ENCODE measurements at regions of chr7 and their contacts with region 1.

Region 1: DNA sequence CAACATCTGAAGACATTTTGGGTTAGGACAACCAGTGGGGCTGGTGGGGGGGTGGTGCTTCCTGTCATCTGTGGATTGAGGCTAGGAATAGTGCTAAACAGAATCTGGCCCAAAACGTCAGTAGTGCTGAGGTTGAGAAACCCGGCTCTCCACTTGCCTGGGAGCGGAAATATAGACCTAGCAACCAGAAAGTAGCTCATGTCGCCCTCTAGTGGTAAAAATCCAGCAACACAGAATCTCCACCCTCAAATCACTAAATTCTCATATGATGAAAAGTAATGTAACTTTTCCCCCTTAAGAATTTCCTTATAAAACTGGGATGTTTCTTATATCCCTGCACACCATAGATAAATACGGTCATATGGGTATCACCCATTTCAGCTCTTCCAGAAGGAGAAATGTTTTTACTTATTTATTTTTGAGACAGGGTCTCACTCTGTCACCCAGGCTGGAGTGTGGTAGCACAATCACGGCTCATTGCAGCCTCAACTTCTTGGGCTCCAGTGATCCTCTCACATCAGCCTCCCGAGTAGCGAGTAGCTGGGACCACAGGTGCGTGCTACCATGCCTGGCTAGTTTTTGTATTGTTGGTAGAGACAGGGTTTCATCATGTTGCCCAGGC is 34.4 kb downstream of the ZC3HAV1 start:
- DNase-seq: peak; percentile 28 to 92 (median 73)
- ATAC-seq: peak; percentile 77
- H3K4me3 ChIP-seq: no peak overlapping the region
- H3K4me3 Mint-ChIP-seq: peak overlapping the region; percentile 60
- H3K27ac ChIP-seq: peak overlapping the region in 1 of 2 experiments; percentile 74
- H3K27ac Mint-ChIP-seq: peak overlapping the region; percentile 86
- H3K4me1 ChIP-seq: peaks cover 73% of the 10 kb centered on the region
- H3K4me1 Mint-ChIP-seq: peaks cover 66% of the 10 kb centered on the region
- H3K27me3 ChIP-seq: no peaks in the 10 kb centered on the region
- H3K27me3 Mint-ChIP-seq: no peaks in the 10 kb centered on the region
- CTCF ChIP-seq: peak; percentile 70

Region 2: DNA sequence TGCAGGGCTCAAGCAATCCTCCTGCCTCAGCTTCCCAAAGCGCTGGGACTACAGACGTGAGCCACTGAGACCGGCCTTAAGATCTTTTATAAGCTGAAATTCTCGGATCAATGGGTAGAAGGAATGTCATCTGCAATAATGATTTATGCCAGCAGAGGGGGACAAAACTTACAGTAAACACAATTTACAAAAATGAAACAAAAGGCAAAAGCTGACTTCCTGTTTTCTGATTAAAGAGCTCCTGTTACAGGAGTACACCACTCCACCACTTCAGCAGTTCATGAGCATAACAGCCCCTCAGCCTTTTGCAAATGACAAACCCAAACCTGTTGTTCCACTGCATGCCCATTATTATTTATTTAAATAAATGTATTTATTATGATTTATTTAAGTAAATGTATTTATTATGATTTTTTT is 188.6 kb before region 1 on chr7:
- CTCF ChIA-PET with region 1: interaction called, 14 read pairs
- POLR2A ChIA-PET with region 1: interaction called, 6 read pairs
- intact Hi-C with region 1: loop called (anchors 1 kb)
- DNase-seq: peak in 6 of 9 experiments; percentile 15 to 84 (median 50)
- ATAC-seq: peak; percentile 93
- H3K4me3 ChIP-seq: no peak overlapping the region
- H3K4me3 Mint-ChIP-seq: peak overlapping the region; percentile 20
- H3K27ac ChIP-seq: peak overlapping the region in 1 of 2 experiments; percentile 5
- H3K27ac Mint-ChIP-seq: peak overlapping the region; percentile 78
- H3K4me1 ChIP-seq: peaks cover 3% of the 10 kb centered on the region
- H3K4me1 Mint-ChIP-seq: peaks cover 12% of the 10 kb centered on the region
- H3K27me3 ChIP-seq: no peaks in the 10 kb centered on the region
- H3K27me3 Mint-ChIP-seq: no peaks in the 10 kb centered on the region
- CTCF ChIP-seq: peak; percentile 72

Region 3: GRCh38 chr7:139023076-139023475 is 52.1 kb before region 1 on chr7:
- CTCF ChIA-PET with region 1: interaction called, 72 read pairs
- POLR2A ChIA-PET with region 1: interaction called, 4 read pairs
- intact Hi-C with region 1: no loop called
- DNase-seq: no peak
- ATAC-seq: no peak
- H3K4me3 ChIP-seq: no peak overlapping the region
- H3K4me3 Mint-ChIP-seq: no peak overlapping the region
- H3K27ac ChIP-seq: no peak overlapping the region
- H3K27ac Mint-ChIP-seq: no peak overlapping the region
- H3K4me1 ChIP-seq: no peaks in the 10 kb centered on the region
- H3K4me1 Mint-ChIP-seq: peaks cover 2% of the 10 kb centered on the region
- H3K27me3 ChIP-seq: no peaks in the 10 kb centered on the region
- H3K27me3 Mint-ChIP-seq: no peaks in the 10 kb centered on the region
- CTCF ChIP-seq: no peak

Region 4: DNA sequence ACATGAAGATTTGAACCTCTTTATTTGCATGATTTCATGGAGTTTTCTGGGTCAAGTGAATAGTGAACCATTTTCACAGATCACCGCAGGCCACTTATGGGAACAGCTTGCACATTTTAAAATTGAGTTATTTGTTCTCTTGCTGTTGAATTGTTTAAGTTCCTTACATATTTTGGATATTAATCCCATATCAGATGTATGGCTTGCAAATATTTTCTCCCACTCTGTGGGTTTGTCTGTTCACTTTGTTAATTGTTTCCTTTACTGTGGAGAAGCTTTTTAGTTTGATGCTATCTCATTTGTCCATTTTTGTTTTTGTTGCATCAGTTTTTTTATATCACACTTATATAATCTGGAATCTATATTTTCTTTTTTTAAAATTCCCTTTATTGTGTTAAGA is 25.2 kb before region 1 on chr7:
- CTCF ChIA-PET with region 1: interaction called, 19 read pairs
- POLR2A ChIA-PET with region 1: no interaction called
- intact Hi-C with region 1: loop called (anchors 2 kb)
- DNase-seq: no peak
- ATAC-seq: no peak
- H3K4me3 ChIP-seq: no peak overlapping the region
- H3K4me3 Mint-ChIP-seq: no peak overlapping the region
- H3K27ac ChIP-seq: no peak overlapping the region
- H3K27ac Mint-ChIP-seq: peak overlapping the region; percentile 73
- H3K4me1 ChIP-seq: peaks cover 7% of the 10 kb centered on the region
- H3K4me1 Mint-ChIP-seq: peaks cover 40% of the 10 kb centered on the region
- H3K27me3 ChIP-seq: no peaks in the 10 kb centered on the region
- H3K27me3 Mint-ChIP-seq: no peaks in the 10 kb centered on the region
- CTCF ChIP-seq: no peak

Region 5: DNA sequence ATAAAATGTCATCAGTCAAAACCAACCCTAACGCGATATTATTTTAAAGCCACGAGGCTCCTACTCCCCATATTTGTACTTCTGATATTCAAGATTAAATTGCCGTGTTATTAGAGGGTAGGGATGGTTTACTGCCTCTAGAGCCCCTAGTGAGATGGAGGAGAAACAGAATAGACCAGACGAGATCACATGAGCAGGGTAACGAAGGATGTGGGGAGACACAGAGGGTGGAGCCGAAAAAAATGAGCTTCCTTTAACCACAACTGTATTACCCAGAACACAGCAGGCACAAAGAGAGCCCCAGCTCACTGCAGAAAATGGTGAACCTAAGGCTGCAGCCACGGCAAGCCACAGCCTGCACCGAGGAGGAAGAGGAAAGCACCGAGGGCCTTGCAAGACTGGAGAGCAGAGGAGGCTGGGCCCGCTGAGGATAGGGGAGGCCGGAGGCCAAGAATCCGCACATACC is 20.1 kb after region 1 on chr7:
- CTCF ChIA-PET with region 1: interaction called, 24 read pairs
- POLR2A ChIA-PET with region 1: interaction called, 37 read pairs
- intact Hi-C with region 1: loop called in 1 of 2 experiments (anchors 1 kb)
- DNase-seq: peak; percentile 57 to 96 (median 82)
- ATAC-seq: peak; percentile 84
- H3K4me3 ChIP-seq: peak overlapping the region; percentile 34 to 53
- H3K4me3 Mint-ChIP-seq: peak overlapping the region; percentile 84
- H3K27ac ChIP-seq: peak overlapping the region; percentile 61 to 76
- H3K27ac Mint-ChIP-seq: peak overlapping the region; percentile 95
- H3K4me1 ChIP-seq: peaks cover 82% of the 10 kb centered on the region
- H3K4me1 Mint-ChIP-seq: peaks cover 86% of the 10 kb centered on the region
- H3K27me3 ChIP-seq: no peaks in the 10 kb centered on the region
- H3K27me3 Mint-ChIP-seq: no peaks in the 10 kb centered on the region
- CTCF ChIP-seq: no peak

Region 6: GRCh38 chr7:139109188-139109982 is 34.2 kb after region 1 on chr7 and contains the start of gene ZC3HAV1:
- CTCF ChIA-PET with region 1: interaction called, 10 read pairs
- POLR2A ChIA-PET with region 1: interaction called, 10 read pairs
- intact Hi-C with region 1: loop called in 1 of 2 experiments (anchors 1 kb)
- DNase-seq: peak; percentile 78 to 97 (median 89)
- ATAC-seq: peak; percentile 87
- H3K4me3 ChIP-seq: peak within 1 kb of the TSS; percentile 81 to 99
- H3K4me3 Mint-ChIP-seq: peak within 1 kb of the TSS; percentile 96
- H3K27ac ChIP-seq: peak within 1 kb of the TSS; percentile 97 to 98
- H3K27ac Mint-ChIP-seq: peak within 1 kb of the TSS; percentile 99
- H3K4me1 ChIP-seq: peaks cover 18% of the 10 kb centered on the region
- H3K4me1 Mint-ChIP-seq: peaks cover 42% of the 10 kb centered on the region
- H3K27me3 ChIP-seq: no peaks in the 10 kb centered on the region
- H3K27me3 Mint-ChIP-seq: no peaks in the 10 kb centered on the region
- CTCF ChIP-seq: no peak
- total RNA-seq, gene ZC3HAV1: 194 to 198 TPM

Region 7: GRCh38 chr7:139124084-139124914 is 49.2 kb after region 1 on chr7:
- CTCF ChIA-PET with region 1: interaction called, 33 read pairs
- POLR2A ChIA-PET with region 1: interaction called, 5 read pairs
- intact Hi-C with region 1: loop called (anchors 2 kb)
- DNase-seq: no peak
- ATAC-seq: no peak
- H3K4me3 ChIP-seq: no peak overlapping the region
- H3K4me3 Mint-ChIP-seq: no peak overlapping the region
- H3K27ac ChIP-seq: no peak overlapping the region
- H3K27ac Mint-ChIP-seq: no peak overlapping the region
- H3K4me1 ChIP-seq: peaks cover 7% of the 10 kb centered on the region
- H3K4me1 Mint-ChIP-seq: peaks cover 18% of the 10 kb centered on the region
- H3K27me3 ChIP-seq: no peaks in the 10 kb centered on the region
- H3K27me3 Mint-ChIP-seq: no peaks in the 10 kb centered on the region
- CTCF ChIP-seq: no peak

Measured in CD8-positive, alpha-beta T cell (primary cell).